ENCODE measurements at regions of chr7 and their contacts with region 1.

Region 1: GRCh38 chr7:45111298-45112223 is at the start of gene TBRG4:
- DNase-seq: peak; percentile 92
- H3K4me3 ChIP-seq: peak within 1 kb of the TSS; percentile 92 to 99 (median 94)
- H3K27ac ChIP-seq: peak within 1 kb of the TSS; percentile 95
- H3K4me1 ChIP-seq: peaks cover 9% of the 10 kb centered on the region
- H3K27me3 ChIP-seq: peaks cover 2% of the 10 kb centered on the region
- CTCF ChIP-seq: peak in 1 of 2 donors; percentile 14
- total RNA-seq, gene TBRG4: 68.8 to 99.4 TPM

Region 2: DNA sequence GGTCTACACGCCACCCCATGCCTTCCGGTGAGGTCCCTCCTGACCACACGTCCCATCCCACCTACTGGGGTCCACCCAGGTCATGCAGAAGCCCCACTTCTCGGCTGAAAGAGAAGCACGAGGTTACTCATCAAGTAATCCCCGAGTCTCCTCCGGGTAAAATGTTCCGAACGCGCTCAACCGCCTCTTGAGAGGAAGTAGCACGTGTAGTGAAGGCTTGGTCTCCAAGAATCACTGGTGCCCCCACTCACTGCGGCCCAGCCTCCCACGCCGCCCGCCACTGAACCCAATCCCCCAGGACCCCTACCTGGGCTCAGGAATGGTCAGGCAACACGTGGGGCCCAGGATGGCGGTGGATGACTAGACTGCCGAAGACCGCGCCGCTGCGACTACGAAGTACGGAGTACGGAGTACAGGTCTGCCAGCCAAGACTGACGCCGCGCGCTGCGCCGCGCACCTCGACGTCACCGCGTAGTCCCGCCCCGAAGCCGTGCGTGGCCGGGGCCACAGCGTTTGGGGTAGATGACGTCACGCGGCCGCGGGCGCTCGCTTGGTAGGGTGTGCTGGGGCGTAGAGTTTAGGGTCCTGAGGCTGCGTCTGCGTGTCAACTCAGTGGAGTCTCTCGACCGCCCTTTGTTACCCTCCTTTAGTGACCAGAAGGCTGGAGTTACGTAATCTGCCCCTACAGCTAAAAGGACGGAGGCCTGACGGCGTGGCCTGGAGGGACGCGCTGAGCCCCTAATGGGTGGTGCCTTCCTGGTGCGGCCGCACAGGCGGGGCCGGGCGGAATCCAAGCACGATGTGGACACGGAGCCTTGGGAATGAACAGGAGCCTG is 125.1 kb before region 1 on chr7:
- CTCF ChIA-PET with region 1: no interaction called
- dilution Hi-C with region 1: no loop called
- in situ Hi-C with region 1: no loop called
- intact Hi-C with region 1: loop called (anchors 2 kb)
- DNase-seq: peak; percentile 91
- H3K4me3 ChIP-seq: peak overlapping the region; percentile 76 to 91 (median 84)
- H3K27ac ChIP-seq: peak overlapping the region; percentile 90
- H3K4me1 ChIP-seq: peaks cover 32% of the 10 kb centered on the region
- H3K27me3 ChIP-seq: no peaks in the 10 kb centered on the region
- CTCF ChIP-seq: no peak

Region 3: DNA sequence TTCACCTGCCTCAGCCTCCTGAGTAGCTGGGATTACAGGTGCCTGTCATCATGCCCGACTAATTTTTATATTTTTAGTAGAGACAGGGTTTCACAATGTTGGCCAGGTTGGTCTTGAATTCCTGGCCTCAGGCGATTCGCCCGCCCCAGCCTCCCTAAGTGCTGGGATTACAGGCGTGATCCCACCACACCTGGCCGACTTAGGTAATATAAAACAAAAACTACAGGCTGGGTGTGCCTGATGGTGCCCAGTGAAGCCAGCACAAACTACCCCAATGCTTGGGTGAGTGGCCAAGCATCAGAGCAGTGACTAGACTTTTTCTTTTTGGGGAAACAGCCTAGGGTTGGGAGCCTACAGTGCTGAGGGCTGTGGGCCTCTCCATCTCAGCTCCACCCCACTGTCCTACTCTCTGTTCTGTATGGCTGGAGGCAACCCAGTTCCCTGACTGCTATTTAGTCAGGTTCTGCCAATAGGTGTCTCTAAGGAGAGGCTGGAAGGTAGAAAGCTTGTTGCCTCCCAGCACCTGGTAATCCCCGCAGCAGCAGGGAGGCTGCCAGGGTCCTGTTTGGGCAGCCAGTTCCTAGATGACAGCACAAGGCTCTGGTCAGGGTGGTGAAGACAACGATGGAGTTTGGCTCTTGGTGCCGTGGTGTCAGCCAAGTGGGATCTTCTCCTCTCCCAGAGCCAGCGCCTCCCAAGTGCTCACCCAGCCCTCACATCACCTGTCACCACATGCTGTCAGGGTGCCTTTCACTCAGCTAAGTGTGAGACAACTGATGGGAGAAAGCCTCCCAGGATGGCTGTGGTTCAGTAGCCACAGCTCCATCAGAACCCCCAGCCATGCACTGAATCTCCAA is 12.3 kb before region 1 on chr7:
- CTCF ChIA-PET with region 1: no interaction called
- dilution Hi-C with region 1: no loop called
- in situ Hi-C with region 1: no loop called
- intact Hi-C with region 1: no loop called
- DNase-seq: no peak
- H3K4me3 ChIP-seq: no peak overlapping the region
- H3K27ac ChIP-seq: no peak overlapping the region
- H3K4me1 ChIP-seq: no peaks in the 10 kb centered on the region
- H3K27me3 ChIP-seq: no peaks in the 10 kb centered on the region
- CTCF ChIP-seq: no peak

Region 4: DNA sequence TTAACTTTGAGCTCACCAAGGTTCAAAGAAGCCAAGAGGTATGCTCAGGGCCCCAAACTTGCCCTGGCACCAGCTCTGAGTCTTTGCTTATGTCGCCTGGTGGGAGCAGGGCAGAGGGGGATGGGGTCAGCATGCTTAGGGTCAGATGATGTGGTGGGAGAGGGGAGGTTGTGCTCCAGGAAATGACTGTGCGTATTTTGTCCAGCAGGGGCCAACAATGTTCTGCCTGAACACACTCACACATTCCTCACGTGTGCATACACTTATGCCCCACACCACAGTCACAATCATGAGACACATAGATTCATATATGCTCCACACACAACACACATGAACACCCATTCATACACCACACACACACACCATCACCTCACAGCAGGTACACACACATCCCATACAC is 41.7 kb after region 1 on chr7:
- CTCF ChIA-PET with region 1: no interaction called
- dilution Hi-C with region 1: no loop called
- in situ Hi-C with region 1: no loop called
- intact Hi-C with region 1: no loop called
- DNase-seq: no peak
- H3K4me3 ChIP-seq: no peak overlapping the region
- H3K27ac ChIP-seq: no peak overlapping the region
- H3K4me1 ChIP-seq: no peaks in the 10 kb centered on the region
- H3K27me3 ChIP-seq: peaks cover 6% of the 10 kb centered on the region
- CTCF ChIP-seq: no peak

Region 5: DNA sequence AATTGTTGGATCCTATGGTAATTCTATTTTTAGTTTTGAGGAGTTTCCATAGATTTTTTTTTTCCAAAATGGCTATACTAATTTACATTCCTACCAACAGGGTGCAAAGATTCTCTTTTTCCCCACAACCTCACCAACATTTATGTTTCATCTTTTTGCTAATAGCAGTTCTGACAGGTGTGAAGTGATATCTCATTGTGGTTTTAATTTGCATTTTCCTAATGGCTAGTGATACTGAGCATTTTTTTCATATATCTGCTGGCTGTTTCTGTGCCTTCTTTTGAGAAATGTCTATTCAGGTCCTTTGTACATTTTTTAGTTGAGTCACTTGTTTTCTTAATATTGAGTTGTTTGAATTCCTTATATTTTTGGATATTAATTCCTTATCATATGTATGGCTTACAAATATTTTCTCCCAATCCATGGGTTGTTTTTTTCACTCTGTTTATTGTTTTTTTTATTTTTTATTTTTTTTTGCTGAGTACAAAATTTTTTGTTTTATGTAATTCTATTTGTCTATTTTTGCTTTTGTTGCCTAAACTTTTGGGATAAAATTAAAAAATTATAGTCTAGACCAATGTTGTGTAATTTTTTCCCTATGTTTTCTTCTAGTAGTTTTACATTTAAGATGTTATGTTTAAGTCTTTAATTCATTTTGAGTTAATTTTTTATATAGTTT is 256.7 kb after region 1 on chr7:
- CTCF ChIA-PET with region 1: no interaction called
- dilution Hi-C with region 1: no loop called
- in situ Hi-C with region 1: no loop called
- intact Hi-C with region 1: no loop called
- DNase-seq: no peak
- H3K4me3 ChIP-seq: no peak overlapping the region
- H3K27ac ChIP-seq: no peak overlapping the region
- H3K4me1 ChIP-seq: no peaks in the 10 kb centered on the region
- H3K27me3 ChIP-seq: no peaks in the 10 kb centered on the region
- CTCF ChIP-seq: no peak

Measured in mammary epithelial cell (primary cell).